ENCODE measurements at regions of chr10 and their contacts with region 1.

Region 1: DNA sequence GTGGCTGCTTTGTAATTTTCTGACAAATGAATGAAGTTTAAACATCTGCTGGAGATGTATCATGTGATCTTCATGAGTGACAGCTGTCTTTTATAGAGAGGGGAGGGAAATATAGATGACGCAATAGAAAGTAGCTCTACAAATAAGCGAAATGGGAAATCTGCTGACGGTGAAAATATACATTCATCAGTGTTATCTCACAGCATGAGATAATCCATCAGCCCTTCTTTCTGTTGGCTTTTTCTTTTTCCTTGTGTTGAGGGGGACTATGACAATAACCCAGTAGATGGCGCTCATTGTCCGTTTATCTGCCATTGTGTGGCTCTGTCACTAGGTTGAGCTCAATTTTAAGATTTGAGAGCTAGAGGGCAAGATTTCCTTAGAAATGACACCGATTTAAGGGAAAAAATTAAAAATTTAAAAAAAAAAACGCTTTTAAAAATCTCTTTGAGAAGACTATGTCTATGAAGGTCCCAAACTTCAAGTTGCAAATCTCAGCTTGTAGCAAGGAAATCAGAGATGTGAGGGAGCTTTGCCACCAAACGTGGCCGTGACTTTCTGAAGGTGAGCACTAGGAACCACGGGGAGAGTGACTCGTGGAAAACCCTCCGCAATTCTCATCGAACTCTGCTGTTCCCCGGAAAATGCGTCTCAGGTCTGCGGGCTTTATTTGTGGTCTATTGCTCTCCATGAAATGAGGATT is 114.6 kb upstream of the SFMBT2 start:
- DNase-seq: peak in 5 of 10 donors; percentile 23 to 65 (median 57)

Region 2: DNA sequence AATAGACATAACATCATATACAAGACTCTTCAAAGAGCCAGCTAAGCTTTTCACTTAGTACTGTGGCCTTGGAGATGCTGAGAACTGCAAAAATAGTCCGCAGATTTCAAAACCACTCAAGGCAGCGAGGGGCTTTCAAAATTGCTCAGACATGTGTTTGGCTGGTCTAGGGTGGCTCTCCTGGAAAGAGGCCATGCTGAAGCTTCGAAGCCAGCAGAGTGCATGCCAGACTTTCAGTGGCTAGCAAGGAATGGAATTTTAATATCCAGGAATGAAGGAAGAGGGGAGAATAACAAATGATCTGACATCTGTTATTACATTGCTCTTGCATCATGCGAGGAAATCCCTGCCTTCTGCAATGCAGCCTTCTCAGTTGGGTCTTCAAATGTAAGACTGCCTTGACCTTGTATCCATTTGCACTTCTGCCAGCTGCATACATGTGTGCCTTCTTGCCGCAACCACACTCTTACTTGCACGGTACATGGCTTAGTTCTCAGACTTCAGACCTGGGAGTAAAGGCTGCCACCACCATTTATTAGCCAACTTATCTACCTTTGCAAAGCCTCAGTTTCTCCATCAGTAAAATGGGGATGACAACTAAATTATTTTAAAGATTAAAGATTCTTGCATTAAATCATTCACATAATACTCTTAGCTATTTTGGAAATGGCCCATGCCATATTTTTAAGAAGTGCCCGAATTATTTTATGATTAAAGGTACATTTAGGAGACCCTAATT is 85.4 kb after region 1 on chr10:
- intact Hi-C with region 1: no loop called
- DNase-seq: no peak

Region 3: GRCh38 chr10:7622969-7623368 is 97.5 kb after region 1 on chr10:
- intact Hi-C with region 1: loop called (anchors 2 kb)
- DNase-seq: peak in 1 of 10 donors; percentile 16

Region 4: DNA sequence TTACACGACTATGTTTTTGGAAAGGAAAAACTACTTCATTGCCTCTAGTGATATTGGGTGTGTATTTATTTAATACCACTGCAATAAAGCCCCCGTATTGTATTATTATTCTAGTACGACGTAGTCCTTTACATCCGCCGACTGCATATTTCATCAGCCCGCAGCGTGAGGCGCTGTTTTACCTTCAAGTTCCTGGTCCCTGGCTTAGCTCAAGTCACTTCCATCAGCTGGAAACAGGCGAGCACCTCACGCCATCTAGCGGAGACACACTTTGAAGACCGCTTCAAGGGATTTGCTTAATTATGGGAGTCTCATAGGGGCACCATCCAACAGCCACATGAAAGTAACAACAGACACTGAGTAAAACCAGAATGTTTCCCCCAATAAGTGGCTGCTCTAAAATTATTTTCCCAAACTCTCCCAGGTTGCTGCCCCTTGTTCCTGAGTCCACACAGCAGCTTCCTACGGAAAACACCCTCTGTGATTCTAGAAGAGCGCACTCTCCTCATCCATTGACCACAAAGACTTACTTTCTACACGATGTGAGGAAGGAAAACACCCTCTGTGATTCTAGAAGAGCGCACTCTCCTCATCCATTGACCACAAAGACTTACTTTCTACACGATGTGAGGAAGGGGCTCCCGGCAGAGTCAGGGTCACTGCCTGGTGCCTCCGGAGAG is 161.9 kb after region 1 on chr10:
- intact Hi-C with region 1: loop called (anchors 1 kb)
- DNase-seq: peak; percentile 52 to 97 (median 82)

Region 5: DNA sequence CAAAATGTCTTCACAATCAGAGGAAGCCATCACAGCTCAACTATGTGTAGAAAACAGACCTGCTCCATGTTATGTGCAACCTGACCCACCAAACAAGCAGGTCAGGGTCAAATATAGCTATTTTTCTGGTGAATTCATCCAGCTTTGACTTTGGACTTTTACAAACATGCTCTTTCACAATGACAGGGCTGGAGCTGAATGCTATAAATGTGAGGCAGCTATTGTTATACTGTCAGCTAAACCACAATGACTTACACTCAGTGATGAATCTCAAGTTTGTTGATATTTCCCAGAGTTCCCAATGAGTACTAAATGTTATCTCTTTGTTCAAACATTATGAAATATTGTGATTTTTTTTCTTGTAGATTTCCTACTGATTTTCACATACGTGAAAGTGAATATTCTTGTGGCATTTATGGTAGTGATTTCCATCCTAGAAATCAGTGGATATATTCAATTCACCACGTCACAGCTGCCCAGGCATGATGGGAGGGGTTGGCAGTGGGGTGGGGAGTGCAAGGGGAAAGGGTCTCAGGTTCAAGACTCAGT is 175.2 kb after region 1 on chr10:
- intact Hi-C with region 1: no loop called
- DNase-seq: no peak

Region 6: GRCh38 chr10:9294865-9295264 is 1769.4 kb after region 1 on chr10:
- intact Hi-C with region 1: loop called (anchors 2 kb)
- DNase-seq: no peak

Region 7: GRCh38 chr10:9302120-9302746 is 1776.8 kb after region 1 on chr10:
- intact Hi-C with region 1: loop called (anchors 2 kb)
- DNase-seq: no peak